Mammary epithelial cell (primary cell): ENCODE measurements at regions of chr7 and their contacts with region 1.

Region 1: DNA sequence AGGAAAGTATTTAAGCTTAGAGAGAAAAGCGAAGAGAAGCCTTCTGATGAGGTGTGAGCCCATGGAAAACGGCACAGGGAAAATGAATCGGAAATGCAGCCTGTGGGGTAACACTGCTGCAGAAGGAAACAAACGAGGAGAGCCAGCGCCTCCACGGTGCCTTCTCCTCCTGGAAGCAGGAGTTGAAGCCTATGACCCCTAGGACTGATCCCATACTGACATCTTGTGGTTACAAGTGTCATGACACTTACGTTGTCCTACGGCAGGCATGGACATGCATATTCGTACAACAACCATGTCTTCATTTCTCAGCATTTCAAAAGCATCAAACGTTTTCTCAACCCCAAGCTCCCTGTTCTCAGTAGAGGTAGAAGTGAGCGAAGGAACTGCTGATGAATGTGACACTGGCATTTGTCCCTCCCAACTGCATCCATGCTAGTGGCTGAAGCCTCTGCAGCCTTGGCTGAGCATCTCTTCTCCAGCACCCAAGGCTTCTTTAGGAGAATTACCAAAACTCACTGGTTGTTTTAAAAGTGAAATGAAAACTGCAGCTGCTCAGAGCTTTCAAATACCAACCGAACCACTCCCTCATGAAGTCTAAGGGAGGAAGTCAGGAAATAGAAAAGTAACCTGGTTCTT is 160.2 kb downstream of the JAZF1 start:
- DNase-seq: peak; percentile 73
- H3K4me3 ChIP-seq: no peak overlapping the region
- H3K27ac ChIP-seq: no peak overlapping the region
- H3K4me1 ChIP-seq: peaks cover 6% of the 10 kb centered on the region
- H3K27me3 ChIP-seq: no peaks in the 10 kb centered on the region
- CTCF ChIP-seq: peak; percentile 89 to 92

Region 2: GRCh38 chr7:27739909-27740448 is 280.4 kb before region 1 on chr7 and contains the start of gene TAX1BP1:
- CTCF ChIA-PET with region 1: no interaction called
- dilution Hi-C with region 1: no loop called
- in situ Hi-C with region 1: no loop called
- intact Hi-C with region 1: loop called (anchors 1 kb)
- DNase-seq: peak; percentile 92
- H3K4me3 ChIP-seq: peak within 1 kb of the TSS; percentile 80 to 97 (median 96)
- H3K27ac ChIP-seq: peak within 1 kb of the TSS; percentile 96
- H3K4me1 ChIP-seq: peaks cover 11% of the 10 kb centered on the region
- H3K27me3 ChIP-seq: no peaks in the 10 kb centered on the region
- CTCF ChIP-seq: no peak
- total RNA-seq, gene TAX1BP1: 84.1 to 93.5 TPM

Region 3: GRCh38 chr7:27774717-27775328 is 245.6 kb before region 1 on chr7:
- CTCF ChIA-PET with region 1: interaction called, 11 read pairs
- dilution Hi-C with region 1: no loop called
- in situ Hi-C with region 1: no loop called
- intact Hi-C with region 1: no loop called
- DNase-seq: peak; percentile 8
- H3K4me3 ChIP-seq: no peak overlapping the region
- H3K27ac ChIP-seq: no peak overlapping the region
- H3K4me1 ChIP-seq: peaks cover 9% of the 10 kb centered on the region
- H3K27me3 ChIP-seq: no peaks in the 10 kb centered on the region
- CTCF ChIP-seq: peak; percentile 53 to 58

Region 4: GRCh38 chr7:28078036-28078901 is 57.8 kb after region 1 on chr7:
- CTCF ChIA-PET with region 1: interaction called, 3 read pairs
- dilution Hi-C with region 1: no loop called
- in situ Hi-C with region 1: no loop called
- intact Hi-C with region 1: loop called (anchors 1 kb)
- DNase-seq: peak; percentile 24
- H3K4me3 ChIP-seq: no peak overlapping the region
- H3K27ac ChIP-seq: no peak overlapping the region
- H3K4me1 ChIP-seq: no peaks in the 10 kb centered on the region
- H3K27me3 ChIP-seq: no peaks in the 10 kb centered on the region
- CTCF ChIP-seq: peak; percentile 98 to 100